ENCODE measurements at regions of chr14 and their contacts with region 1.

Region 1: GRCh38 chr14:92513204-92513973 is at the start of gene RIN3:
- DNase-seq: peak; percentile 65
- ATAC-seq: peak; percentile 63
- H3K4me3 ChIP-seq: peak within 1 kb of the TSS; percentile 68
- H3K27ac ChIP-seq: peak within 1 kb of the TSS; percentile 82
- H3K4me1 ChIP-seq: peaks cover 13% of the 10 kb centered on the region
- H3K27me3 ChIP-seq: no peaks in the 10 kb centered on the region
- CTCF ChIP-seq: no peak
- POLR2A ChIP-seq: peak; percentile 73
- RAD21 ChIP-seq: no peak
- total RNA-seq, gene RIN3: 2.2 and 2.5 TPM in 2 replicates

Region 2: GRCh38 chr14:92552066-92552465 is 38.7 kb after region 1 on chr14:
- CTCF ChIA-PET with region 1: no interaction called
- POLR2A ChIA-PET with region 1: no interaction called
- dilution Hi-C with region 1: no loop called
- in situ Hi-C with region 1: no loop called
- intact Hi-C with region 1: loop called (anchors 1 kb)
- DNase-seq: no peak
- ATAC-seq: no peak
- H3K4me3 ChIP-seq: no peak overlapping the region
- H3K27ac ChIP-seq: no peak overlapping the region
- H3K4me1 ChIP-seq: peaks cover 15% of the 10 kb centered on the region
- H3K27me3 ChIP-seq: no peaks in the 10 kb centered on the region
- CTCF ChIP-seq: no peak
- POLR2A ChIP-seq: no peak
- RAD21 ChIP-seq: no peak

Region 3: DNA sequence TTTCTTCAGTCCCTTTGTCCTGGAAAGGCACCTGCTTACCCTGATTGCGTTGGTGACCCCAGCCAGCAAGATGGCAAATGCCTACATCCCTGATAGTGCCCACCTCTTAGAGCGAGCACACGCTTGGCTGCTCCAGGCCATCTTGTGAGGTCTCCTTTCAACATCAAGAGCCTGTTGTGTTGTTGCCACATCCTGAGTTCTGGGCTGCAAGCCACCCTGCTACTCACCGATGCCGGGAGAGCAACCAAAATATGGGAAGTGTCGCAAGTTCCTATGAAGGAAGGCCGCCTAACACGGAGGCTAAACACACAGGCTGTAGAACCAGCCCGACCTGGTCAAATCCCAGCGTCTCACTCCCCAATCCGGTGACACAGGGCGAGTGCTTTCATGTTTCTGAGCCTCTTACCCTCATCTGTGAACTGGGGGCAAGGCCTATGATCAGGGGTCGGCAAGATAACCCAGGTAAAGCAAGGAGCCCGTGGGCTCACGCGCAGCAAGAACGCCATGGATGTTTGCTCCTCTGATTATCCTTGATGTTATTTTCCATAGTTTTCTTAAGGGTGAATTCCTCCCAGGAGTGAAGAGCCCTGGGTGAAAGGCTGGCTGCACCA is 136.7 kb after region 1 on chr14:
- CTCF ChIA-PET with region 1: no interaction called
- POLR2A ChIA-PET with region 1: no interaction called
- dilution Hi-C with region 1: no loop called
- in situ Hi-C with region 1: no loop called
- intact Hi-C with region 1: loop called (anchors 10 kb)
- DNase-seq: peak; percentile 92
- ATAC-seq: no peak; the same call in 1 of the 2 replicates
- H3K4me3 ChIP-seq: no peak overlapping the region
- H3K27ac ChIP-seq: peak overlapping the region; percentile 100
- H3K4me1 ChIP-seq: peaks cover 39% of the 10 kb centered on the region
- H3K27me3 ChIP-seq: no peaks in the 10 kb centered on the region
- CTCF ChIP-seq: no peak
- POLR2A ChIP-seq: no peak
- RAD21 ChIP-seq: no peak